Activated naive CD8-positive, alpha-beta T cell treated with anti-CD3 and anti-CD28 coated beads, Interleukin-2, amount 10 ng/mL, durations not matched to agents 7 days and 5 days (primary cell): ENCODE measurements at regions of chr2 and their contacts with region 1.

Region 1: GRCh38 chr2:233084488-233084887 is 24.3 kb downstream of the INPP5D start:
- DNase-seq: no peak
- ATAC-seq: peak; percentile 35
- H3K4me3 Mint-ChIP-seq: peak overlapping the region; percentile 74
- H3K27ac Mint-ChIP-seq: peak overlapping the region; percentile 90
- H3K4me1 Mint-ChIP-seq: peaks cover 67% of the 10 kb centered on the region
- H3K27me3 Mint-ChIP-seq: no peaks in the 10 kb centered on the region

Region 2: GRCh38 chr2:233100192-233100998 is 15.9 kb after region 1 on chr2:
- POLR2A ChIA-PET with region 1: interaction called, 18 read pairs
- DNase-seq: peak; percentile 54
- ATAC-seq: peak; percentile 77
- H3K4me3 Mint-ChIP-seq: peak overlapping the region; percentile 49
- H3K27ac Mint-ChIP-seq: peak overlapping the region; percentile 61
- H3K4me1 Mint-ChIP-seq: peaks cover 52% of the 10 kb centered on the region
- H3K27me3 Mint-ChIP-seq: no peaks in the 10 kb centered on the region